ENCODE measurements at regions of chrX and their contacts with region 1.

Region 1: DNA sequence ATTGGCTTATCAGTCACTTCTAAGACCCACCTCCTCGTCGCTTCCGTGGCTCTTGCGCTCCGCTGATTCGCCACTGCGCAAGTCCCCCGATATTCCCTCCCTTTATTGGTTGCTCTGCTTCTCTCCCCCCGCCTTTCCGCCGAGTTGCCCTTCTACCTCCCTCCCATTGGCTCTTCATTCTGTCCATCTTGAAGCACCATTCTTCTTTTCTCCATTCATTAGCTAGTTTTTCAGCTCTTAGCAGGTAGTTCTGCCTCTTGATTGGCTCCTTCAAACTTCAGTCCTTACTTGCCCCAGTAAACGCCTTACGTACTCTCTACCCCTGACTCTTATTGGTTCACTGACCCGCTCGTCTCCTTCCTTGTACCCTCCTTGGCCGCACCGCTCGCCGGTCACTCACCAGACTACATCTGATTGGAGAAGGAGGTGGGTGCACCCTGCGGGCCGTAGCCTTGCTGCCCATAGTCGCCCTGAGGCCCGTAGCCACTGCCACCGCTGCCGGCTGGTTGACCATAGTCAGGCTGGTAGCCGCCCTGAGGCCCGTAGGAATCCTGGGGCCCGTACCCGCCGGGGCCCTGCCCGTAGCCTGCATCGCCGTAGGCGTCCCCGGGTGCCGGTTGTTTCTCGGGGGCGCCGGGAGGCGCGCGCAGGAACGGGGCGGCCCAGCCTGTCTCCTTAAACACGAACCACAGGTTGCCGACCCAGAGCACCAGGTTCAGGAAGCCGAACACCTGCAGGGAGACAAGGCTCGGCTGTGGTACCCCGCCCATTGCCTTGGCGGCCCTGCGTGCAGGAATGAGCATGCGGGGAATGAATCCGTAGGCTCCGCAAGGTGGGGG is 5.1 kb upstream of the PRICKLE3 start:
- DNase-seq: peak; percentile 83

Region 2: GRCh38 chrX:49172280-49172780 is 18.9 kb before region 1 on chrX:
- CTCF ChIA-PET with region 1: interaction called, 7 read pairs
- POLR2A ChIA-PET with region 1: interaction called, 10 read pairs
- DNase-seq: no peak

Region 3: DNA sequence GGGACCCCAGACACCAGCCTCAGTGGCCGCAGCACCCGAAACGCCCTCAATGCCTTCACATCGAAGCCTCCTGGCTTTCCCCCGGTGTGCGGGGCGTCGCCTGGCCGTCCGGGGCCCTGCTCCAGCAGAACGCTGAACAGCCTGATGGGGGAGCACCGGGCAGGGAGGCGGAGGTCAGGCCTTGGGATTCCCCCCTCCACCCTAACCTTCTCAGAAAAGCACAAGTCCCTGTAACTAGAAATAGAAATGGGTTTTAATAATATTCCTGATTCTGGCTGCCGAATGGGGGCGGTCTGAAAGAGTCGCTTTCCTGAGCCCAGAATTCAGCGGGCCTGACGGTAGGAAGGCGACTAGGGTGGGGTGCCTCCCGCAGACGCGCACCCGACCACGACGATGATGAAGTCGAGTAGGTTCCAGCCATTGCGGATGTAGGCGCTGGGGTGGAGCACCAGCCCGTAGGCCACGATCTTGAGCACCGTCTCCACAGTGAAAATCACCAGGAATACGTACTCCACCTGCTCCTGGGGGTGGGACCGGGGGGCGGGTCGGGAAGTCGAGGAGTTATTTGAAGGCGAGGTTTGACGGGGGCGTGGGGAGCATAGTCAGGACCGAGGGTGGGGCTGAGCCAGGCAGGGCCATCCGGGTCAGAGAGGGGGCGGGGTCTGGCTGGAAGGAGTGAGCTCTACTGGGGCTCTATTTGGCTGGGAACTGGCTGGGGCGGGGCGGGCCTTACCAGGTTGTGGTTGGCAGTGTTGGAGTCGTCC is 39.4 kb after region 1 on chrX:
- CTCF ChIA-PET with region 1: interaction called, 3 read pairs
- POLR2A ChIA-PET with region 1: interaction called, 10 read pairs
- DNase-seq: no peak

Region 4: GRCh38 chrX:49269010-49269767 is 77.9 kb after region 1 on chrX:
- CTCF ChIA-PET with region 1: interaction called, 3 read pairs
- POLR2A ChIA-PET with region 1: interaction called, 31 read pairs
- DNase-seq: peak; percentile 87